Uterus (tissue), 4 donors: ENCODE measurements at regions of chr20 and their contacts with region 1.

Region 1: DNA sequence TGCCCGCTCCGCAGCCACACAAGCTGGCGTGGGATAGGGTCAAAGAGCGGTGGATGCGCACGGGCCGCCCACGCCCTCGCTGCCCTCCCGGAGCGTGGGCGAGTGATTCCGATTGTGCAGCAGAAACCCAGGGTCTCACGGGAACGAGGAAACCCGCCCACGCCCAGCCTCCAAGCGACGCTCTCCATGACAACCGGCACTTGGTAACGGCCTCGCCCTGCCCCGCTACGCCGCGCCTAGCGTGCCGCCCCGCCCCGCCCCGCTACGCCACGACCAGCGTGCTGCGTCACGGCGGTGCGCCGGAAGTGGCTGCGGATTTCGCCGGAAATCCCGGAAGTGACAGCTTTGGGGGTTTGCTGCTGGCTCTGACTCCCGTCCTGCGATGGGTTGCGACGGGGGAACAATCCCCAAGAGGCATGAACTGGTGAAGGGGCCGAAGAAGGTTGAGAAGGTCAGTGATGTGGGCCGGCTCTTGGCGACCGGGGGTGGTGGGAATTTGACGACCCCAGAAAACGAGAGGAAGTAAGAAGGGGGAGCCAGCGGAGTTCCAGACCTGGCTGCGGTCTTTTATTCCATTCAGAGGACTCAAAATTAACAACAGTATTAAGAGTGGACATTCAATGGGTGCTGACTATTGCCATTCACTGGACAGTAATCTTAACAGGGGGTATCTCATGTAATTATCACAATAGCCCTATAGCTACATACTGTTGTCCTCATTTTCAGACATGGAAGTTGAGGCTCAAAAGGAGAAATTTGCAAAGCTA is at the start of gene RTF2:
- DNase-seq: peak; percentile 90 to 95
- H3K4me3 ChIP-seq: peak within 1 kb of the TSS; percentile 66 to 92
- H3K27ac ChIP-seq: peak within 1 kb of the TSS; percentile 84
- H3K4me1 ChIP-seq: peaks cover 0 to 10% of the 10 kb centered on the region in 2 donors
- H3K27me3 ChIP-seq: no peaks in the 10 kb centered on the region
- CTCF ChIP-seq: peak in 3 of 4 experiments; percentile 9 to 21 (median 17)
- POLR2A ChIP-seq: peak; percentile 27 to 66
- total RNA-seq, gene RTF2: 27.4 to 86.6 (median 69.6) TPM

Region 2: DNA sequence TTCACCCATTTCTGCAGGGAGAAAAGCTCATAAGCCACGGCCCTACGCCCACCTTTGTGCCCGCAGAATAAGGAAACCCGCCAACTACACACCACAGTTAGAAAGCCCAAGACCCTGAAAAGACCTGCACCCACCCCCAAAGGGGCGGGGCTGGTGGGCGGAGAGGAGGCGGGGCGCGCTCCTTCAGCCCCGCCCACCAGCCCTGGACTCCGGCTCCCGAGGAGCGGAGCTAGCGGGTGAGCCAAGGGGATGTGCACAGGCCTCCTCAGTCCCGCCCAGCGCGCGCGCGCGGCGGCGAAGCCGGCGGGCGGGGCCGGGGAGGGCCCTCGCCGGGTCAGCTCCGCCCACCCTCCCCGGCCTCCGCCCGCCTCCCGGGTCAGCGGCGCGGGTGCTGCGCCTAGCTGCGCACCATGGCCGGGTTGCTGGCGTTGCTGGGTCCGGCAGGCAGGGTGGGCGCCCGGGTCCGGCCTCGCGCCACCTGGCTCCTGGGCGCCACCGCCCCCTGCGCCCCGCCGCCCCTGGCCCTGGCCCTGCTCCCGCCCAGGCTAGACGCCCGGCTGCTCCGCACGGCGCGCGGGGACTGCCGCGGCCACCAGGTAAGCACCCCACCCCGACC is 109.8 kb before region 1 on chr20 and contains the start of gene FAM210B:
- intact Hi-C with region 1: no loop called
- DNase-seq: peak; percentile 86 to 89
- H3K4me3 ChIP-seq: peak within 1 kb of the TSS; percentile 76 to 88
- H3K27ac ChIP-seq: peak within 1 kb of the TSS; percentile 75 to 82
- H3K4me1 ChIP-seq: peaks cover 0 to 10% of the 10 kb centered on the region in 2 donors
- H3K27me3 ChIP-seq: no peaks in the 10 kb centered on the region
- CTCF ChIP-seq: no peak
- POLR2A ChIP-seq: peak; percentile 42 to 68
- total RNA-seq, gene FAM210B: 28.2 to 46.5 (median 37.4) TPM

Region 3: DNA sequence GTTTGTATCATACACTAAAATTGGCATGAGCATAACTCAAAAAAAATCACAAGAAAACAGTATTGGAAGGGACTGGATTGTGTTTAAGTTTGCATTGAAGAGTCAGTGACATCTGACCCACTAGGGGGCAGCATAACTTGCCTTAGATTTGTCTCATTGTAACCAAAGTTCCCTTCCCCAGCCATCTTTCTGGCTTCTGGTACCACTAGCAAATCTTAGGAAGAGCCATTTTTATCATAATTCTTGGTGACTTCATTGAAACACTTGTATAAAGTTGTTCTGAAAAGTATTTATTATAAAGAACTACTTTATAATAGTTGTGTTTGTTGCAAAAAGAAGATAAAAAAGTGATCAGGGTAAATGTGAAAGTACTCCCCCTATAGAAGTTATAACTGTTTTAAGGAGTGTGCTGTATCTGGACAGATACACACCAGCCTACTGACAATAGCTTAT is 68.4 kb before region 1 on chr20:
- intact Hi-C with region 1: loop called (anchors 10 kb)
- DNase-seq: no peak
- H3K4me3 ChIP-seq: no peak overlapping the region
- H3K27ac ChIP-seq: no peak overlapping the region
- H3K4me1 ChIP-seq: no peaks in the 10 kb centered on the region
- H3K27me3 ChIP-seq: no peaks in the 10 kb centered on the region
- CTCF ChIP-seq: peak; percentile 38 to 50 (median 45)
- POLR2A ChIP-seq: no peak